Naive thymus-derived CD4-positive, alpha-beta T cell (primary cell): ENCODE measurements at regions of chr2 and their contacts with region 1.

Region 1: GRCh38 chr2:68751397-68752339 is 17.1 kb downstream of the ARHGAP25 start:
- DNase-seq: peak; percentile 77 to 88 (median 85)
- ATAC-seq: peak; percentile 97
- H3K4me3 ChIP-seq: peak overlapping the region; percentile 24
- H3K4me3 Mint-ChIP-seq: peak overlapping the region; percentile 9 to 94 (median 66)
- H3K27ac ChIP-seq: peak overlapping the region; percentile 65
- H3K27ac Mint-ChIP-seq: peak overlapping the region in 8 of 9 donors; percentile 57 to 96 (median 82)
- H3K4me1 ChIP-seq: peaks cover 82 to 83% of the 10 kb centered on the region in 2 donors
- H3K4me1 Mint-ChIP-seq: peaks cover 61 to 94% (median 87%) of the 10 kb centered on the region in 7 donors
- H3K27me3 ChIP-seq: no peaks in the 10 kb centered on the region
- H3K27me3 Mint-ChIP-seq: no peaks in the 10 kb centered on the region

Region 2: DNA sequence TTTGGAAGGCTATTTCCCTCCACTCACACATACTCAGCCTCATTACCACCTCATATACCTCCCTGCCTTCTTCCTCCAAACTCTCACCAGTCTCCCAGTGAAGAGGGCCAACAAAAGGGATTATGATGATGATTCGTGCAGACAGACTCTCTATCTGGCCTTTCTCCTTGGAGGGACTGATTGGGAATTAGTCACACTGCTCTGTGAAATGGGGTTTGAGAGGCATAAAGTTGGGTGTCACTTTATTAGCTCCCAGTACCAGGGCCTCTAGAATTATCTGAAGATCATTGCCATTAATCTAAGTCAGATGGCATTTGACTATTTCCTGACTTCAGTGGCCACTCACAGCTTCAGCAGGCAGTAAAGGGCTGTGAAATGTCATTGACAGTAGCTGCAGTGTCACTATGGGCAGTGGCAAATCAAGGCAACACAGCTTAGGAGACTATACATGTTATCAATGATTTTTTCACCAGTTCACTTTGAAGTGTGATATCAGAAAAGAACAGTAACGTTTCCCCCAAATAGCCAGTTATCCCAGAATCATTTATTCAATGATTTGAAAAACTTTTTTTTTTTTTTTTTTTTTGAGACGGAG is 449.3 kb before region 1 on chr2:
- CTCF ChIA-PET with region 1: no interaction called
- POLR2A ChIA-PET with region 1: no interaction called
- intact Hi-C with region 1: no loop called
- DNase-seq: no peak
- ATAC-seq: no peak
- H3K4me3 ChIP-seq: no peak overlapping the region
- H3K4me3 Mint-ChIP-seq: no peak overlapping the region
- H3K27ac ChIP-seq: no peak overlapping the region
- H3K27ac Mint-ChIP-seq: no peak overlapping the region
- H3K4me1 ChIP-seq: no peaks in the 10 kb centered on the region
- H3K4me1 Mint-ChIP-seq: no peaks in the 10 kb centered on the region
- H3K27me3 ChIP-seq: no peaks in the 10 kb centered on the region
- H3K27me3 Mint-ChIP-seq: peaks cover 0 to 13% (median 5%) of the 10 kb centered on the region in 5 donors

Region 3: GRCh38 chr2:68487773-68488355 is 263.8 kb before region 1 on chr2:
- CTCF ChIA-PET with region 1: no interaction called
- POLR2A ChIA-PET with region 1: no interaction called
- intact Hi-C with region 1: loop called in 1 of 2 experiments (anchors 5 kb)
- DNase-seq: peak in 4 of 9 donors; percentile 22 to 38 (median 28)
- ATAC-seq: peak; percentile 72
- H3K4me3 ChIP-seq: no peak overlapping the region
- H3K4me3 Mint-ChIP-seq: no peak overlapping the region
- H3K27ac ChIP-seq: no peak overlapping the region
- H3K27ac Mint-ChIP-seq: no peak overlapping the region
- H3K4me1 ChIP-seq: no peaks in the 10 kb centered on the region
- H3K4me1 Mint-ChIP-seq: peaks cover 0 to 5% (median 2%) of the 10 kb centered on the region in 7 donors
- H3K27me3 ChIP-seq: no peaks in the 10 kb centered on the region
- H3K27me3 Mint-ChIP-seq: no peaks in the 10 kb centered on the region

Region 4: DNA sequence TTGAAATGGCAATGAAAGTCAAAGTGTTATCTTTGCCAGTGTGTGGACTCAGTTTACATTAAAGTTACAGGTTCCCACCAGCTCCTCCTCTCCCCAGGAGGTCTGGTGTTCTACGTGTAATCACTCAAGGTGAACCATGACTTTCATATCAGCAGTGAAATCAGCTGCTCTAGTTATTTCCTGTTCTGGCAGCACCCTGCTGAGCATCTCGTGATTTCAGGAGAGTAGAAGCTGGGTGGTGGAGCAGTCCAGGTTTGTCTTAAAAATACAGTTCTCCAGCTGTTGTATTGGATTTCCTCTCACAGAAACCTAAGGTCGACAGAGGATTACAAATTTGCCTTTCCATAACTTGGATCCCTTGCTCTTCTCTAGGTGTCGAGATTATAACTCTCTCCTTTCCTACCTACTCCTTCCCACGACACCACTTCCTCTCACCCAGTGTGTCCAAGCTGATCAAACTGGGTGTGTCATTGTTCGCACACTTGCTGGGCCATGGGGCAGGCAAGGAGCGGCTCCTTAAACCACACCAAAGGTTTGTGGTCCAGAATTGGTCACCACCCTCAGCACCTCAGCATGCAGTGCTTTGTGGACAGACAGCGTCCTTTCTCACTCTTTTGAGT is 30.1 kb before region 1 on chr2:
- CTCF ChIA-PET with region 1: interaction called, 14 read pairs
- POLR2A ChIA-PET with region 1: interaction called, 24 read pairs
- intact Hi-C with region 1: no loop called
- DNase-seq: peak in 7 of 9 donors; percentile 52 to 69 (median 61)
- ATAC-seq: peak; percentile 83
- H3K4me3 ChIP-seq: peak overlapping the region; percentile 9
- H3K4me3 Mint-ChIP-seq: peak overlapping the region; percentile 76 to 91 (median 82)
- H3K27ac ChIP-seq: peak overlapping the region; percentile 68
- H3K27ac Mint-ChIP-seq: peak overlapping the region; percentile 78 to 97 (median 95)
- H3K4me1 ChIP-seq: peaks cover 72 to 87% of the 10 kb centered on the region in 2 donors
- H3K4me1 Mint-ChIP-seq: peaks cover 65 to 96% (median 93%) of the 10 kb centered on the region in 7 donors
- H3K27me3 ChIP-seq: no peaks in the 10 kb centered on the region
- H3K27me3 Mint-ChIP-seq: no peaks in the 10 kb centered on the region

Region 5: DNA sequence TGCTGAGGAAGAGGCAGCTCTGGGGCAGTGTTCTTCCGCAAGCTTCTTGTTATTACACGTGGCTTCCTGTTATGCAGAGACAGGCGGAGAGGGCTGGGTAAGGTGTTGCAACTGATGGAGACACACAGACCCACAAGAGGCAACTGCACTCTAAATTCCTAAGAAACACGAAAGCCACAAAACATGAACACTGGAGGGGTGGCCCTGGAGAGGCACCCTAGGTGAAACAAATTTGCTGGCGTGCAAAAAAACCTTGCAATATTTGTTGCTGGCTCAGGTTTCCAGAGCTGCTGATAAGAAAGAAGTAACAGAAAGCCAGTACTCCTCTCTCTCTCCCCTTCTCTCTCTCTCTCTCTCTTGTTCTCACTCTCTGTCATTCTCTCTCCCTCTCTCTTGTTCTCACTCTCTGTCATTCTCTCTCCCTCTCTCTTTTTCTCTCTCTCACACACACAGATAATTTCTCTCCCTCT is 14.7 kb after region 1 on chr2:
- CTCF ChIA-PET with region 1: interaction called, 39 read pairs
- POLR2A ChIA-PET with region 1: interaction called, 288 read pairs
- intact Hi-C with region 1: loop called (anchors 1 kb)
- DNase-seq: peak; percentile 27 to 85 (median 78)
- ATAC-seq: peak; percentile 86
- H3K4me3 ChIP-seq: peak overlapping the region; percentile 36
- H3K4me3 Mint-ChIP-seq: peak overlapping the region; percentile 77 to 94 (median 82)
- H3K27ac ChIP-seq: peak overlapping the region; percentile 82
- H3K27ac Mint-ChIP-seq: peak overlapping the region in 8 of 9 donors; percentile 93 to 99 (median 97)
- H3K4me1 ChIP-seq: peaks cover 97 to 98% of the 10 kb centered on the region in 2 donors
- H3K4me1 Mint-ChIP-seq: peaks cover 70 to 100% (median 99%) of the 10 kb centered on the region in 7 donors
- H3K27me3 ChIP-seq: no peaks in the 10 kb centered on the region
- H3K27me3 Mint-ChIP-seq: no peaks in the 10 kb centered on the region

Region 6: GRCh38 chr2:68796294-68796905 is 44.7 kb after region 1 on chr2:
- CTCF ChIA-PET with region 1: interaction called, 11 read pairs
- POLR2A ChIA-PET with region 1: interaction called, 6 read pairs
- intact Hi-C with region 1: loop called in 1 of 2 experiments (anchors 1 kb)
- DNase-seq: peak in 6 of 9 donors; percentile 33 to 62 (median 54)
- ATAC-seq: peak; percentile 73
- H3K4me3 ChIP-seq: peak overlapping the region; percentile 15
- H3K4me3 Mint-ChIP-seq: peak overlapping the region; percentile 62 to 86 (median 72)
- H3K27ac ChIP-seq: peak overlapping the region; percentile 44
- H3K27ac Mint-ChIP-seq: peak overlapping the region; percentile 83 to 98 (median 88)
- H3K4me1 ChIP-seq: peaks cover 52 to 60% of the 10 kb centered on the region in 2 donors
- H3K4me1 Mint-ChIP-seq: peaks cover 64 to 92% (median 82%) of the 10 kb centered on the region in 7 donors
- H3K27me3 ChIP-seq: no peaks in the 10 kb centered on the region
- H3K27me3 Mint-ChIP-seq: no peaks in the 10 kb centered on the region

Region 7: GRCh38 chr2:68837164-68837860 is 85.6 kb after region 1 on chr2:
- CTCF ChIA-PET with region 1: interaction called, 87 read pairs
- POLR2A ChIA-PET with region 1: interaction called, 16 read pairs
- intact Hi-C with region 1: loop called (anchors 1 kb)
- DNase-seq: peak; percentile 25 to 67 (median 57)
- ATAC-seq: peak; percentile 77
- H3K4me3 ChIP-seq: no peak overlapping the region
- H3K4me3 Mint-ChIP-seq: no peak overlapping the region
- H3K27ac ChIP-seq: no peak overlapping the region
- H3K27ac Mint-ChIP-seq: peak overlapping the region in 2 of 9 donors; percentile 15 to 75
- H3K4me1 ChIP-seq: peaks cover 0 to 13% of the 10 kb centered on the region in 2 donors
- H3K4me1 Mint-ChIP-seq: peaks cover 15 to 51% (median 43%) of the 10 kb centered on the region in 7 donors
- H3K27me3 ChIP-seq: no peaks in the 10 kb centered on the region
- H3K27me3 Mint-ChIP-seq: no peaks in the 10 kb centered on the region

Region 8: GRCh38 chr2:69012310-69013141 is 260.9 kb after region 1 on chr2:
- CTCF ChIA-PET with region 1: no interaction called
- POLR2A ChIA-PET with region 1: no interaction called
- intact Hi-C with region 1: no loop called
- DNase-seq: peak in 8 of 9 donors; percentile 5 to 39 (median 30)
- ATAC-seq: peak; percentile 72
- H3K4me3 ChIP-seq: peak overlapping the region; percentile 56
- H3K4me3 Mint-ChIP-seq: peak overlapping the region; percentile 76 to 89 (median 86)
- H3K27ac ChIP-seq: no peak overlapping the region
- H3K27ac Mint-ChIP-seq: peak overlapping the region in 1 of 9 donors; percentile 20
- H3K4me1 ChIP-seq: peaks cover 0 to 5% of the 10 kb centered on the region in 2 donors
- H3K4me1 Mint-ChIP-seq: peaks cover 7 to 17% (median 14%) of the 10 kb centered on the region in 7 donors
- H3K27me3 ChIP-seq: peaks cover 0 to 7% of the 10 kb centered on the region in 2 donors
- H3K27me3 Mint-ChIP-seq: peaks cover 33 to 75% (median 47%) of the 10 kb centered on the region in 5 donors

Region 9: DNA sequence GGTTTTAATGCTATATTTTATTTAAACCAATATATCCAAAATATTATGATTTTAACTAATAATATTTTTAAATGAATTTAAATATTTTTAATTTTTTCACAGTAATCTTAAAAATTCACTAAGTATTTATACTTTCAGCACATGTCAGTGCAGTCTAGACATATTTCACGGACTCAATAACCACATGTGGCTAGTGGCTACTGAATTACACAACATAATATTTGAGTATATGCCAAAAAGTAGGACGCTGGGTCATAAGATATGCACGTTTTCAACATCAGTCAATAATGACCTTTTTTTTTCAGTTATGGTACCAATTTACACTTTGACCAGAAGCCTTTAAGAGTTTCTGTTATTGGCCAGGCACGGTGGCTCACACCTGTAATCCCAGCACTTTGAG is 517.7 kb after region 1 on chr2:
- CTCF ChIA-PET with region 1: no interaction called
- POLR2A ChIA-PET with region 1: no interaction called
- intact Hi-C with region 1: no loop called
- DNase-seq: no peak
- ATAC-seq: no peak
- H3K4me3 ChIP-seq: no peak overlapping the region
- H3K4me3 Mint-ChIP-seq: no peak overlapping the region
- H3K27ac ChIP-seq: no peak overlapping the region
- H3K27ac Mint-ChIP-seq: no peak overlapping the region
- H3K4me1 ChIP-seq: no peaks in the 10 kb centered on the region
- H3K4me1 Mint-ChIP-seq: peaks cover 0 to 4% (median 0%) of the 10 kb centered on the region in 7 donors
- H3K27me3 ChIP-seq: no peaks in the 10 kb centered on the region
- H3K27me3 Mint-ChIP-seq: peaks cover 27 to 47% (median 40%) of the 10 kb centered on the region in 5 donors